PC-9 (cell line): ENCODE measurements at regions of chr16 and their contacts with region 1.

Region 1: DNA sequence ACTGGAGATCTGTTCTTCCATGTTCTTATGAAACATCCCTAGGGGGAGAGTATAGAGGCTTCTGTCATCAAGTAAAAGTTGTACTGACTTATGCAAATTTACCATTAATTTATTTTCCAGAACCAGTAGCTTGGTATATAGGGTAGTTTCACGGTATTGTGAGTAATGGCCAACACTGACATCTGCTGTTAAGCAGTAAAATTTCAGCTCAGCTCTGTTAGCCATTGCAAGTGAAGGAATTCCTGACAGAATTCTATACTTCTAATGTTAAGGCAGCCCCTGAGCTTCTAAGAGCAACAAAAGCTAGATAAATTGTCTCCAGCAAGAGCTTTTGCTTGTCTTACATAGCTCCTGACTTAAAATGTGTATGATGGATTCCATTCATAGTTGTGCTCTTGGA is 613.5 kb upstream of the C16orf82 start:
- DNase-seq: no peak
- H3K4me3 ChIP-seq: no peak overlapping the region
- H3K27ac ChIP-seq: no peak overlapping the region
- H3K4me1 ChIP-seq: no peaks in the 10 kb centered on the region
- H3K27me3 ChIP-seq: no peaks in the 10 kb centered on the region
- CTCF ChIP-seq: no peak

Region 2: GRCh38 chr16:26345966-26346365 is 107.2 kb before region 1 on chr16:
- CTCF ChIA-PET with region 1: interaction called, 12 read pairs
- POLR2A ChIA-PET with region 1: no interaction called
- intact Hi-C with region 1: no loop called
- DNase-seq: no peak
- H3K4me3 ChIP-seq: no peak overlapping the region
- H3K27ac ChIP-seq: no peak overlapping the region
- H3K4me1 ChIP-seq: no peaks in the 10 kb centered on the region
- H3K27me3 ChIP-seq: peaks cover 9% of the 10 kb centered on the region; the same call in 1 of the 2 replicates
- CTCF ChIP-seq: no peak